GM13976 (cell line): ENCODE measurements at regions of chr22 and their contacts with region 1.

Region 1: GRCh38 chr22:46681010-46681409 is 57.0 kb downstream of the CERK start:
- DNase-seq: peak; percentile 66
- CTCF ChIP-seq: peak; percentile 51

Region 2: GRCh38 chr22:46563381-46564083 is 117.5 kb before region 1 on chr22:
- in situ Hi-C with region 1: loop called (anchors 10 kb)
- DNase-seq: peak; percentile 87
- CTCF ChIP-seq: peak; percentile 87